ENCODE measurements at regions of chr3 and their contacts with region 1.

Region 1: GRCh38 chr3:143001369-143002082 is at the start of gene U2SURP:
- DNase-seq: peak; percentile 77 to 95 (median 88)
- ATAC-seq: peak; percentile 99
- H3K4me3 ChIP-seq: peak within 1 kb of the TSS; percentile 96
- H3K4me3 Mint-ChIP-seq: peak within 1 kb of the TSS; percentile 91 to 100 (median 98)
- H3K27ac ChIP-seq: peak within 1 kb of the TSS; percentile 95
- H3K27ac Mint-ChIP-seq: peak within 1 kb of the TSS; percentile 96 to 100 (median 99)
- H3K4me1 ChIP-seq: peaks cover 13 to 20% of the 10 kb centered on the region in 2 donors
- H3K4me1 Mint-ChIP-seq: peaks cover 34 to 63% (median 53%) of the 10 kb centered on the region in 7 donors
- H3K27me3 ChIP-seq: no peaks in the 10 kb centered on the region
- H3K27me3 Mint-ChIP-seq: peaks cover 0 to 5% (median 2%) of the 10 kb centered on the region in 5 donors
- total RNA-seq, gene U2SURP: 132 to 172 (median 158) TPM

Region 2: GRCh38 chr3:141231101-141231935 is 1770.2 kb before region 1 on chr3 and contains the start of gene PXYLP1:
- CTCF ChIA-PET with region 1: no interaction called
- POLR2A ChIA-PET with region 1: no interaction called
- intact Hi-C with region 1: loop called in 1 of 2 experiments (anchors 1 kb)
- DNase-seq: peak; percentile 83 to 97 (median 91)
- ATAC-seq: peak; percentile 98
- H3K4me3 ChIP-seq: peak within 1 kb of the TSS; percentile 72
- H3K4me3 Mint-ChIP-seq: peak within 1 kb of the TSS; percentile 85 to 94 (median 92)
- H3K27ac ChIP-seq: peak within 1 kb of the TSS; percentile 85
- H3K27ac Mint-ChIP-seq: peak within 1 kb of the TSS; percentile 91 to 98 (median 98)
- H3K4me1 ChIP-seq: peaks cover 6 to 33% of the 10 kb centered on the region in 2 donors
- H3K4me1 Mint-ChIP-seq: peaks cover 50 to 66% (median 54%) of the 10 kb centered on the region in 7 donors
- H3K27me3 ChIP-seq: no peaks in the 10 kb centered on the region
- H3K27me3 Mint-ChIP-seq: peaks cover 0 to 6% (median 0%) of the 10 kb centered on the region in 5 donors
- total RNA-seq, gene PXYLP1: 18.6 to 40.9 (median 23.2) TPM

Region 3: DNA sequence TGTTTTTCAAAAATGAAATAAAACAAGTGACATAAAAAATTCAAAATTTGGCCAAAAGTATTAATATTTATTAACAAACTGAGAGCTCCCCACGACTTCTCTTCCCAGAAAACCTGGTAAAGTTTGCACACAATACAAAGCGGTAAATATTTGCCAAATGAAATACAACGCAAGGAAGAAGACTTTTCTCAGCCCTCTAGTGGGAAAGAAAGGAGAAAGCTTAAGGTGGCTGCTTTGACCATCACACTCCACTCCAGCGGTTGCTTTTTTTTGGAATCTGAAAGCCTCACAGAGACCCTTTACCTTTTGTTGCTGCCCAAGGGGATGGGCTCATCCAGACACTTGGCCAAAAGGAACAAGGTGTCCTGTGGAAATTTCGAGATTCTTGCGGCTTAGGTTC is 775.0 kb before region 1 on chr3:
- CTCF ChIA-PET with region 1: no interaction called
- POLR2A ChIA-PET with region 1: no interaction called
- intact Hi-C with region 1: loop called in 1 of 2 experiments (anchors 1 kb)
- DNase-seq: no peak
- ATAC-seq: no peak
- H3K4me3 ChIP-seq: no peak overlapping the region
- H3K4me3 Mint-ChIP-seq: peak overlapping the region; percentile 62 to 94 (median 82)
- H3K27ac ChIP-seq: no peak overlapping the region
- H3K27ac Mint-ChIP-seq: peak overlapping the region in 3 of 9 donors; percentile 18 to 45 (median 33)
- H3K4me1 ChIP-seq: no peaks in the 10 kb centered on the region
- H3K4me1 Mint-ChIP-seq: peaks cover 0 to 21% (median 16%) of the 10 kb centered on the region in 7 donors
- H3K27me3 ChIP-seq: no peaks in the 10 kb centered on the region
- H3K27me3 Mint-ChIP-seq: no peaks in the 10 kb centered on the region

Region 4: DNA sequence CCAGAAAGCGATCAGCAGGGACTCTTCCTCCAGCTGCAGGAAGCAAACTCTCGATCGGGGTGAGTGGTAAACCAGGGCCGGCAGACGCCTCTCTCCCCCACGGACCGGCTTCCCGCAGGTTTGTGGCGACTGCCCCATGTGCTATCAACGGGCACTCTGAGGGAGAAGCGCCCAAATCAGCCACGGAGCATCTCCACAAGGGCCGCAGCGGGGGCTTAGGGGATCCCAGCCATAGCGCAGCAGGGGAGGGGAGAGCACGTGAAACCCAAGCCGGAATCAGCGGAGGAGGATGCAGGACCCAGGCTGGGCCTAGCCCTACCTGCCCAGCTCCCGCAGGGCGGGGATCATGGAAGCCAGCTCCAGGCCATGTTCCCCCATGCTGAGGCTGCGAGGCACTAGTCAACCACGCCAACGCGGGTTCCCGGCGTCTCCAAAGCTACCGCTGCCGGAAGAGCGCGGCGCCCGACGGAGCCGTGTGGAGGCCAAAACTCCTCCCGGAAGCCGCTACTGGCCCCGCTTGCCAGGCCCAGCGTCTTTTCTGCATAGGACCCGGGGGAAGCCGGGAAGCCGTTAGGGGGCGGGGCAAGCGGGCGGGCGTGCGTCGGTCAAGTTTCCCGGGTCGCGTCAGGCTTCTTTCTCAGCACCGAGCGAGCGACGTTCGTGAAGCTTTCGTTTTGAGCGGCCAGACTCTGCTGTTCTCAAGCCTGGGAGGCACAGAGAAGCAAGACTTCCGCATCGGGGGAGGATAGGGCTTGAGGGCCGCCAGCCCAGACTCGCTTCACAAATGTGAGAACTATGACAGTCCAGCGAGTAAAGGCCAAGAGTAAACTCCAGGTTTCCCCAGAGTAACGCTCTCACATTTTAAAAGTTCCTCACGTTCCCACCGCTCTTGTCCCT is 423.0 kb before region 1 on chr3 and contains the start of gene ATR:
- CTCF ChIA-PET with region 1: interaction called, 3 read pairs
- POLR2A ChIA-PET with region 1: interaction called, 36 read pairs
- intact Hi-C with region 1: loop called (anchors 1 kb)
- DNase-seq: peak; percentile 89 to 96 (median 95)
- ATAC-seq: peak; percentile 96
- H3K4me3 ChIP-seq: peak within 1 kb of the TSS; percentile 97
- H3K4me3 Mint-ChIP-seq: peak within 1 kb of the TSS; percentile 93 to 99 (median 97)
- H3K27ac ChIP-seq: peak within 1 kb of the TSS; percentile 94
- H3K27ac Mint-ChIP-seq: peak within 1 kb of the TSS; percentile 96 to 99 (median 98)
- H3K4me1 ChIP-seq: peaks cover 25 to 26% of the 10 kb centered on the region in 2 donors
- H3K4me1 Mint-ChIP-seq: peaks cover 45 to 60% (median 54%) of the 10 kb centered on the region in 7 donors
- H3K27me3 ChIP-seq: no peaks in the 10 kb centered on the region
- H3K27me3 Mint-ChIP-seq: peaks cover 0 to 20% (median 0%) of the 10 kb centered on the region in 5 donors
- total RNA-seq, gene ATR: 31.3 to 48.3 (median 36.2) TPM

Region 5: GRCh38 chr3:143016321-143016972 is 14.9 kb after region 1 on chr3:
- CTCF ChIA-PET with region 1: no interaction called
- POLR2A ChIA-PET with region 1: interaction called, 8 read pairs
- intact Hi-C with region 1: loop called (anchors 1 kb)
- DNase-seq: peak in 4 of 9 donors; percentile 6 to 22 (median 12)
- ATAC-seq: peak; percentile 55
- H3K4me3 ChIP-seq: no peak overlapping the region
- H3K4me3 Mint-ChIP-seq: no peak overlapping the region
- H3K27ac ChIP-seq: no peak overlapping the region
- H3K27ac Mint-ChIP-seq: no peak overlapping the region
- H3K4me1 ChIP-seq: no peaks in the 10 kb centered on the region
- H3K4me1 Mint-ChIP-seq: peaks cover 4 to 32% (median 21%) of the 10 kb centered on the region in 7 donors
- H3K27me3 ChIP-seq: no peaks in the 10 kb centered on the region
- H3K27me3 Mint-ChIP-seq: no peaks in the 10 kb centered on the region

Region 6: DNA sequence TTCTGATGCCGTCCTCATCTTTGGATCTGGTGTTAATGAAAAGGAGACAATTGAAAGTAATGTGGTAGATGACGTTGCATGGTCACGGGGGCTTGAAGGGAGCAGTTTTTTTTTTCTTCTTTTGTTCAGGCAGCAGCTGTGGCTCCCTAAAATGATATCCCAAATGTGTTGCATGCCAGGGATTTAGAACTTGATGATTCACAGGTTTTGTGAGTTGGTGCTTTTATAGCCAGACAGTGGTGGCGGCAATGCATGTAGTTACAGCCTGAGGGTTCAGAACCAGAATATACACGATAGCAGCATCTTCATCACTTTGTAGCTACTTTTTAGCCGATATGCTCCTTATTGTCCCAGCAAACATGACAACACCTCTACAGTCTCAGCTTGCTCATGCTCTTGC is 251.4 kb after region 1 on chr3:
- CTCF ChIA-PET with region 1: no interaction called
- POLR2A ChIA-PET with region 1: no interaction called
- intact Hi-C with region 1: no loop called
- DNase-seq: no peak
- ATAC-seq: no peak
- H3K4me3 ChIP-seq: no peak overlapping the region
- H3K4me3 Mint-ChIP-seq: no peak overlapping the region
- H3K27ac ChIP-seq: no peak overlapping the region
- H3K27ac Mint-ChIP-seq: no peak overlapping the region
- H3K4me1 ChIP-seq: no peaks in the 10 kb centered on the region
- H3K4me1 Mint-ChIP-seq: peaks cover 0 to 21% (median 0%) of the 10 kb centered on the region in 7 donors
- H3K27me3 ChIP-seq: no peaks in the 10 kb centered on the region
- H3K27me3 Mint-ChIP-seq: no peaks in the 10 kb centered on the region

Region 7: DNA sequence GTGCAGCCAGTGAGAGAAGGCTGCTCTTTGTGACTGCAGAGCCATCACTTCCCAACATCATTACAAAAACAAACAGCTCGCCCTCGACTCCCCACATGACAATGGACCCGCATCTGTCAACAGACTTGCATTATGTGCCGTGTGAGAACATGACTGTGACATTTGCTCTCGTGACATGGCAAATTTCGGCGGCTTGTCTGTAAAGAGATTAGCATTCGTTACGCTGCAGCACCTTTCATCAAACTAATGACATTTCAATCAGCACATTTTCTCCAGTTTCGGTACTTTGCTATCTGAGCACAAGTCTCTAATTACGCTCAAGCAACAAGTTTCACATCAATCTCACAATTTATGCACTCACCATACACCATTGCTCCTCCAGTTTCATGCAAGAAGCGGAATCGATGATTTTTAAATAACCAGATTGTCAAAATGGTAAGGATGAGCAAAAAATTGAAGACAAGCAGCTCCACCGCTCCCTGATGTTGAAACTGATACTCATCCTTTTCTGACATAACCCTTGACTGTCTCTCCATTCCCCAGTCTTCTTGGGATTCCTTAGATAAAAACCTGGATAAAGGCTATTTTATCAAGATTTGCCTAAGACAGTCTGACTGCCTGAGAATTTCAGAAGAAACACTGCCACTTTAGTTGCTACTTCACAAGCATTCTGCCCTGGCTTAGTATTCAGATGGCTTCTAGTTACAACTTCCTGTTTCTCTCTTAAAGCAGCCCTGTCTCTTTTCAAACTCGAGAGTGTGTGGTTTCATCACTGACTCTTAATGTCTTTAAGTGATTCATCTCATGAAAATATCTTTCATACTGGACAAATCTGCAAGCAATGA is 846.5 kb after region 1 on chr3 and contains the start of gene SLC9A9:
- CTCF ChIA-PET with region 1: interaction called, 3 read pairs
- POLR2A ChIA-PET with region 1: no interaction called
- intact Hi-C with region 1: loop called in 1 of 2 experiments (anchors 2 kb)
- DNase-seq: peak in 8 of 9 donors; percentile 11 to 50 (median 40)
- ATAC-seq: peak; percentile 93
- H3K4me3 ChIP-seq: peak within 1 kb of the TSS; percentile 71
- H3K4me3 Mint-ChIP-seq: peak within 1 kb of the TSS; percentile 88 to 98 (median 96)
- H3K27ac ChIP-seq: peak within 1 kb of the TSS; percentile 72
- H3K27ac Mint-ChIP-seq: peak within 1 kb of the TSS; percentile 80 to 96 (median 90)
- H3K4me1 ChIP-seq: peaks cover 17 to 21% of the 10 kb centered on the region in 2 donors
- H3K4me1 Mint-ChIP-seq: peaks cover 31 to 62% (median 55%) of the 10 kb centered on the region in 7 donors
- H3K27me3 ChIP-seq: no peaks in the 10 kb centered on the region
- H3K27me3 Mint-ChIP-seq: peaks cover 0 to 4% (median 0%) of the 10 kb centered on the region in 5 donors
- total RNA-seq, gene SLC9A9: 9.3 to 21.9 (median 16.6) TPM

Measured in naive thymus-derived CD4-positive, alpha-beta T cell (primary cell).